ENCODE measurements at regions of chr4 and their contacts with region 1.

Region 1: DNA sequence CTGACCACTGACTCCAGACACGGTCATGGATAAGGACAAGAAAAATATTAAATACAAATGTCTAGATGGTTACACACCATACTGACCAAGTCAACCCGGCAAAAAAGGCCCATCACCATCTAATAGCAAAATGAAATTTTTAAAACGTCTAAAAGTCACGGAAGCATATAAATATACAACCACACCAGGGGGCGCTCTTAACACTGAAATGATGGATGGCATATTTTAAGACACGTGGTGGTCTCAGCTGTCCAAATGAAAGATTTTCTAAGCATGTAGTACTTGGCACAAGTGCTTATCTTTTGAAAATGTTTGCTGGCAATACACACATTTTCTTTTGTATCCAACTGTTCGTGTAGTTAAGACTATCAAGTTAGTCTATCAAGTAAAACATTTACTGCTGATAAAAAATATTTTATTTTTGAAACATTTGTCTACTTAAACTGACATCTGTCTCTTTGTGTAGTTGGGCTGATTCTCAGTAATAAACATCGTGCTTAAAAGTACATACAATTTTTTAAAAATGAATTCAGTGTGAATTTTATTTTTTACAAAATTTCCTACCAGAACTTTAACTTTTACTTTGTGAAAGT is 64.6 kb downstream of the COX7B2 start:
- DNase-seq: peak in 35 of 42 donors; percentile 13 to 88 (median 62)

Region 2: DNA sequence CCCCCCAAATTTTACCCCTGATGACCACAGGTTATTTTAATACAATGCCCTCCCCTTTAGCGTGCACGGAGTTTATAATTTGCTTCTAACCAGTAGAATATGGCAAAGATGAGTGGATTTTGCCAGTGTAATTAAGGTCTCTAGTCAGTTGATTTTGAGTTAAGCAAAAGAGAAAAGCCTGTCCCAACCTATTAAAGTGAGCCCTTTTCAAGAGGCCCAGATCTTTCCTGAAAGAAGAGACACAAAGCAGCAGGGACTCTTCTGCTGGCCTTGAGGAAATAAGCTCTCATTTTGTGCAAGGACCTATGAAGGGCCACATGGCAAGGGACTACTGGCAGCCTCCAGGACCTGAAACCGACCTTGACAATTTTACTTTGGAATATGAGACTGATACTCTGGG is 658.7 kb before region 1 on chr4:
- intact Hi-C with region 1: no loop called
- DNase-seq: no peak

Region 3: DNA sequence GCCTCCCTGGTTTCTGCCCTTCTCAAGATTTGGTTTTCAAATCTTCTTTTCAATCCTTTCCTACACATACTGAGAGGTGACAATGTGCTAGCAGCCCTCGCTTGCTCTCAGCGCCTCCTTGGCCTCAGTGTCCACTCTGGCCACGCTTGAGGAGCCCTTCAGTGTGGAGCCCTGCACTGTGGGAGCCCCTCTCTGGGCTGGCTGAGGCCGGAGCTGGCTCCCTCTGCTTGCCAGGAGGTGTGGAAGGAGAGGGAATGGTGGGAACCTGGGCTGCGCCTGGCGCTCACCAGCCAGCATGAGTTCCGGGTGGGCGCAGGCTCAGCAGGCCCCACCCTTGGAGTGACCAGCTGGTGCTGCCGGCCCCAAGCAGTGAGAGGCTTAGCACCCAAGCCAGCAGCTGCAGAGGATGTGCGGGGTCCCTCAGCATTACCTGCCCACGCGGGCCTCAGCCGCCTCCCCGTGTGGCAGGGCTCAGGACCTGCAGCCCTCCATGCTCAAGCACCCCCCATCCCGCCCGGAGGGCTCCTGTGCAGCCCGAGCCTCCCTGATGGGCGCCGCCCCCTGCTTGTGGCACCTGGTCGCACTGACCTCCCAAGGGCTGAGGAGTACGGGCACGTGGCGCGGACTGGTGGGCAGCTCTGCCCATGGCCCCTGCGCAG is 62.9 kb before region 1 on chr4:
- intact Hi-C with region 1: no loop called
- DNase-seq: no peak

Region 4: DNA sequence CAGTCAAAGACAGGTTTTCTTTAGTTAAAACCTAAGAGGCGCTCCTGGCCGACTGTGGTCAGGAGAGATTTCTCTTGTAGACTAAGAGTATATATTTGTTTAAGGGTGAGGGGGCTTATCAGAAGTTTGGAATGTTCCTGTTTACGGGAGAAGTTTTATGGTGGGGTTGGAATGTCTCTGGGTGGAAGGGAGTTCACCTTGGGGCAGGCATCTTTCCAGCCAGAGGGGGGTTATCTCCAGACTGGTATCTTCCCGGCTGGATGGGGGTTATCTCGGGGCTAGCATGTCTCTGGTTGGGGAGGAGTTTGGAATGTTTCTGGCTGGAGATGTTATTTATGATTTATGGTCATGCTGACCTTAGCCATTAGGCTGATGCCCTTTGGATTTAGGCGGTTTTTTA is 51.4 kb before region 1 on chr4:
- intact Hi-C with region 1: no loop called
- DNase-seq: no peak

Region 5: DNA sequence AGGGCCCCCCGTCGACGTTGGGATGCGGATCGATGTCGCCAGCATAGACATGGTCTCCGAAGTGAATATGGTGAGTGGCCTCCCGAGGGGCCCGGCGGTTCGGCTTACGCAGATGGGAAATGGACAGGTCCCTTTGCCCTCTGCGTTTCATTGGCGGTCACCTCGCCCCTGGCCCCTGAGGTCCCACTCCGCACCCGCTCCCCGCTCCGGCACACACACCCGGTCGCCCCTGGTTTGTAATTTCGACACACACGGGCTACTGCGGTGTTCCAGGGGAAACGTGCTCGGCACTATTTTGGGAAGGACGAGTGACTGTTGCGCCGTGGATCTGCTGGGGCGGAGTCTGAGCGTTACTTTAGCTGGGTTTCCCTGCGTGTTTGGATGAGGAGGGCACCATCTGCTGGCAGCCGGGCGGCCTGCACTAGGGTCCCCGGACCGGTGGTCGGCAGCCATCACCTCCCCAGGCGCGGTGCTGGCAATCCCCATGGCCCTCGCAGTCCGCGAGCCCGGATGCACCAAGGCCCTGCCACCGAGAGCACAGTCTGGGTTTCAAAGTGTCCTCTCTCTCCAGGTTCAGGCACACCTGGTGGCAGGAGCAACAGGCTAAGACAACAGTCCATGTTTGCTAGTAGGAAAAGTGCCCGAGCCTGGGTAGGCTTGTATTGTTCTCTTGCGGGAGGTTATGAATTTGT is 188.1 kb after region 1 on chr4:
- intact Hi-C with region 1: loop called (anchors 5 kb)
- DNase-seq: peak; percentile 69 to 94 (median 84)